Right cardiac atrium (tissue), 5 donors: ENCODE measurements at regions of chr2 and their contacts with region 1.

Region 1: GRCh38 chr2:118855451-118856279 is 8.2 kb upstream of the EN1 start:
- DNase-seq: peak; percentile 82 to 93 (median 91)
- ATAC-seq: peak; percentile 88 to 90
- H3K4me3 ChIP-seq: peak overlapping the region; percentile 32
- H3K27ac ChIP-seq: no peak overlapping the region
- H3K4me1 ChIP-seq: no peaks in the 10 kb centered on the region
- H3K27me3 ChIP-seq: peaks cover 4% of the 10 kb centered on the region

Region 2: DNA sequence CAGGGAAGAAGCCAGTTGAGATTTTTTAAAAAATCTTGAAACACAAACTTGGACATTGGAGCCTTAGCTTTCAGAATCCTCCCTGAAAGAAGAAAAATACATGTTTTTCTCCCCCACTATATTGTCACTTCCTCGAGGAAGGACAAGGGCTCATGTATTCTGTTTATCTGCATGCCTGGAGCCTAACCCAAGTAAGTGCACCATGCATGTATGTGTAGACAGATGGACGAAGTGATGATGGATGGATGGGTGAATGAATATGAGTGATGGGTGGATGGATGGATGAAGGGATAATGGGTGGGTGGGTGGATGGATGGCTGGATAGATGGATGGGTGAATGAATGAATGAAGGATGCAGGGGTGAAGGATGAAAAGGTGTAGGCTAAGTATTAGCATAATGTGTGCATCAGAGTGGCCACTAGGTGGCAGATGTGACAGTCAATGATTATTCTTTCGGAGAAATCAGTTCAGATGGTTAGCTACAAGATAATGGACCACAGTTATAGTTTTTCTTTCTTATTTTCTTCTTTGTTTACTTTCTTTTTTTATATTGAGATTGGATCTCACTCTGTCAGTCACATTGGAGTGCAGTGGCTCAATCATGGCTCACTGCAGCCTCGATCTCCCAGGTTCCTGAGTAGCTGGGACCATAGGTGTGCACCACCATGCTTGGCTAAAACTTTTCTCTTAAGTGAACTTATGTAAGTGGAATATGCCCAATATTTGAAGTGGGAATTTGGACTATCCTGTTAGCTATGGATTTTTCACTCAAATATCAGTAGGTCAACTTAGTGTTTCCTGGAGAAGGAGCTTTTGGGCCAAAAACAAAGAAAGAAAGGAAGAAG is 823.3 kb before region 1 on chr2:
- intact Hi-C with region 1: loop called in 1 of 4 experiments (anchors 5 kb)
- DNase-seq: peak in 1 of 3 donors; percentile 58
- ATAC-seq: peak; percentile 41 to 43
- H3K4me3 ChIP-seq: no peak overlapping the region
- H3K27ac ChIP-seq: no peak overlapping the region
- H3K4me1 ChIP-seq: no peaks in the 10 kb centered on the region
- H3K27me3 ChIP-seq: no peaks in the 10 kb centered on the region

Region 3: DNA sequence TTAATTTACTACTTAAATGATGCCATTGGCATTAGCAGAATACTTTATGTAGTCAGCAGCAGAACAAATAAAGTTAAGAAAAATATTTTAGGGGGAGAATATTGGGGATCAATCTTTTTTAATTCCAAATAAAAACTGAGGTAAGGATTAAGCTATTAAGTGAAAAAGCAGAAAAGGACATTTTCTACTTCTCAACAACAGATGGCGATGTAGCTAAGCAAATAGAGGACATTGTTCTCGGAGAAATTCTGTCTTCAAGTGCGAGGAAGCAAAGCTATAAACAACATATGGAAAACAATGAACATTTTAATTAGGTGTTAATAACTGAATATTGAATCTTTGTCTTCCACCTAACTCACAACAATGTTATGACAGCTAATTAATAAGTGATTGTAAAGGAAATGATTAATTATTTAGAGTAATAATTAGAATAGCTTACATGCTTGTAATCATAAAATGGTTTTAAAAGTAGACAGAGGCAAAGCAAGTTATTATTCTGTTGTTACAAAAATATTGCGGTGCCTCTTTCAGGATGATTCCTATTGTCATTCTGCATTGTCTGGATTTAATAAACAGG is 808.9 kb before region 1 on chr2:
- intact Hi-C with region 1: loop called (anchors 5 to 10 kb)
- DNase-seq: no peak
- ATAC-seq: no peak
- H3K4me3 ChIP-seq: no peak overlapping the region
- H3K27ac ChIP-seq: no peak overlapping the region
- H3K4me1 ChIP-seq: no peaks in the 10 kb centered on the region
- H3K27me3 ChIP-seq: peaks cover 2% of the 10 kb centered on the region

Region 4: GRCh38 chr2:118221666-118222594 is 633.7 kb before region 1 on chr2:
- intact Hi-C with region 1: loop called (anchors 5 to 10 kb)
- DNase-seq: no peak
- ATAC-seq: peak; percentile 69 to 84
- H3K4me3 ChIP-seq: no peak overlapping the region
- H3K27ac ChIP-seq: no peak overlapping the region
- H3K4me1 ChIP-seq: peaks cover 2% of the 10 kb centered on the region
- H3K27me3 ChIP-seq: peaks cover 2% of the 10 kb centered on the region

Region 5: DNA sequence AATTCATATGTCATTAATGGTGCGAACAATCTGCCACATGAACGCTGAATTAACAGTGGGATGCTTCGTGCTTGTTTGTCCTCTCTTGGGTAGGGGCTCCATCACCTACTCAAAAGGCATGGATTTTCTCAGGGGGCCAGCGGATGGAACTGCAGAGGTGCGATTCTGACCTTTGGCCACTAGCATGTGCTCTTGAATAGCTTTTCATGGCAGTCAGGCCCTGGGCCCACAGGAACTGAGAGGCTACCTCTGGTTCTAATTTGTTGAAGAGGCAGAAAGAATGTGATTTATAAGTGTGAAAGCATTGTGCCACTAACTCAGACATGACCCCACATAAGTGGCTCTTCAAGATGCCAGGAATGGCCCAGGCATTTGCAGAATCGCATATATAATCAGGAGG is 484.1 kb before region 1 on chr2:
- intact Hi-C with region 1: loop called in 2 of 4 experiments (anchors 5 to 10 kb)
- DNase-seq: no peak
- ATAC-seq: no peak
- H3K4me3 ChIP-seq: no peak overlapping the region
- H3K27ac ChIP-seq: no peak overlapping the region
- H3K4me1 ChIP-seq: no peaks in the 10 kb centered on the region
- H3K27me3 ChIP-seq: no peaks in the 10 kb centered on the region

Region 6: DNA sequence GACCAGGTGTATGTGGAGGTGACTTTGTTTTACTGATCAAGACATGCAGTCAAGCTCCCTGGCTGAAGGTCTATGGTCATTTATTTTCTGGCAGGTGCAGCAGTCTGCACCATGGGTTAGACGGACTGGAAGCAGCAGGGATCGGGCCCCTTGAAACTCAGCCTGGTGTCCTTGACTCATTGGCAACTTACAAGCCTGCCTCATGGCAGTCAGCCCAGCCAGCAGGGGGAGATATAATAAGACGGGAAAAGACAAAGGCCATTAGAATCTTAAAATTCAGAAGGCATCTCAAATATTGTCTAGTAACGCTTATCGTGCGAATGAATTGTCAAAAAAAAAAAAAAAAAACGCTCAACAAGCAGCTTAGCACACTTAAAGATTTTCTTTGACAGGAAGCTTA is 316.4 kb before region 1 on chr2:
- intact Hi-C with region 1: loop called in 1 of 4 experiments (anchors 5 kb)
- DNase-seq: peak; percentile 21 to 73 (median 46)
- ATAC-seq: no peak
- H3K4me3 ChIP-seq: no peak overlapping the region
- H3K27ac ChIP-seq: no peak overlapping the region
- H3K4me1 ChIP-seq: no peaks in the 10 kb centered on the region
- H3K27me3 ChIP-seq: no peaks in the 10 kb centered on the region